Activated B cell treated with CpG ODN at 0.5 μM for 24 hours (primary cell): ENCODE measurements at regions of chrX and their contacts with region 1.

Region 1: GRCh38 chrX:138745196-138745595 is 33.7 kb upstream of the FGF13 start:
- DNase-seq: no peak
- ATAC-seq: no peak
- H3K4me3 Mint-ChIP-seq: no peak overlapping the region
- H3K27ac Mint-ChIP-seq: no peak overlapping the region
- H3K4me1 Mint-ChIP-seq: no peaks in the 10 kb centered on the region
- H3K27me3 Mint-ChIP-seq: no peaks in the 10 kb centered on the region
- CTCF ChIP-seq: no peak

Region 2: GRCh38 chrX:137600769-137601168 is 1144.4 kb before region 1 on chrX:
- CTCF ChIA-PET with region 1: no interaction called
- POLR2A ChIA-PET with region 1: no interaction called
- intact Hi-C with region 1: no loop called
- DNase-seq: no peak
- ATAC-seq: no peak
- H3K4me3 Mint-ChIP-seq: no peak overlapping the region
- H3K27ac Mint-ChIP-seq: no peak overlapping the region
- H3K4me1 Mint-ChIP-seq: no peaks in the 10 kb centered on the region
- H3K27me3 Mint-ChIP-seq: no peaks in the 10 kb centered on the region
- CTCF ChIP-seq: no peak

Region 3: DNA sequence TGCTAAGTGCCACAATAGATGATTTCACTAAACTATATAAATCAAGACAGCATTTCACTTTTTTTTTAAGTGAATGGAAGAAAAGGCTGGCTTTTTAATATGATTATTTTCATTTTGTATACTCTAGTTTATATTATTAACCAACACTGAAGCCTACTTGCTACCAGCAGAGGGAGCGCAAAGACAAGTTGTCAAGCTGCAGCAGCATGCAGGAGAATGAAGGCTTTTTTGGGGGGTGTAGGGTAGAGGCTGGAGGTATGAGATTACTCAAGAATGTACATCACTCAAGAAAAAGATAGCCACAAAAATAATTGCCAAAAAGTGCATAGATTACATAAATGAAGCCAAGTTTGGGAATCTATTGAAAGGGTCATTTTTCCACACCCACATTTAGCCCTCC is 553.2 kb before region 1 on chrX:
- CTCF ChIA-PET with region 1: no interaction called
- POLR2A ChIA-PET with region 1: no interaction called
- intact Hi-C with region 1: loop called (anchors 5 kb)
- DNase-seq: no peak
- ATAC-seq: no peak
- H3K4me3 Mint-ChIP-seq: no peak overlapping the region
- H3K27ac Mint-ChIP-seq: no peak overlapping the region
- H3K4me1 Mint-ChIP-seq: no peaks in the 10 kb centered on the region
- H3K27me3 Mint-ChIP-seq: no peaks in the 10 kb centered on the region
- CTCF ChIP-seq: no peak